ENCODE measurements at regions of chr12 and their contacts with region 1.

Region 1: GRCh38 chr12:42325653-42326474 is at the starts of genes PPHLN1 and ZCRB1:
- DNase-seq: peak; percentile 89
- ATAC-seq: peak; percentile 92
- H3K4me3 Mint-ChIP-seq: peak within 1 kb of the TSS; percentile 98
- H3K27ac Mint-ChIP-seq: peak within 1 kb of the TSS; percentile 97
- H3K4me1 Mint-ChIP-seq: peaks cover 45% of the 10 kb centered on the region
- H3K27me3 Mint-ChIP-seq: no peaks in the 10 kb centered on the region
- total RNA-seq, gene PPHLN1: 86.2 to 90.0 TPM
- total RNA-seq, gene ZCRB1: 79.9 to 103 TPM

Region 2: GRCh38 chr12:42097971-42098370 is 227.9 kb before region 1 on chr12:
- CTCF ChIA-PET with region 1: no interaction called
- POLR2A ChIA-PET with region 1: no interaction called
- intact Hi-C with region 1: loop called in 1 of 2 experiments (anchors 1 kb)
- DNase-seq: peak; percentile 9
- ATAC-seq: peak; percentile 83
- H3K4me3 Mint-ChIP-seq: peak overlapping the region; percentile 72
- H3K27ac Mint-ChIP-seq: peak overlapping the region; percentile 93
- H3K4me1 Mint-ChIP-seq: peaks cover 43% of the 10 kb centered on the region
- H3K27me3 Mint-ChIP-seq: no peaks in the 10 kb centered on the region

Region 3: GRCh38 chr12:42144408-42145196 is 181.3 kb before region 1 on chr12 and contains the start of gene GXYLT1:
- CTCF ChIA-PET with region 1: no interaction called
- POLR2A ChIA-PET with region 1: interaction called, 3 read pairs
- intact Hi-C with region 1: loop called (anchors 1 to 5 kb)
- DNase-seq: peak; percentile 85
- ATAC-seq: peak; percentile 91
- H3K4me3 Mint-ChIP-seq: peak within 1 kb of the TSS; percentile 92
- H3K27ac Mint-ChIP-seq: peak within 1 kb of the TSS; percentile 65
- H3K4me1 Mint-ChIP-seq: peaks cover 34% of the 10 kb centered on the region
- H3K27me3 Mint-ChIP-seq: peaks cover 2% of the 10 kb centered on the region
- total RNA-seq, gene GXYLT1: 6.1 to 6.7 TPM

Region 4: DNA sequence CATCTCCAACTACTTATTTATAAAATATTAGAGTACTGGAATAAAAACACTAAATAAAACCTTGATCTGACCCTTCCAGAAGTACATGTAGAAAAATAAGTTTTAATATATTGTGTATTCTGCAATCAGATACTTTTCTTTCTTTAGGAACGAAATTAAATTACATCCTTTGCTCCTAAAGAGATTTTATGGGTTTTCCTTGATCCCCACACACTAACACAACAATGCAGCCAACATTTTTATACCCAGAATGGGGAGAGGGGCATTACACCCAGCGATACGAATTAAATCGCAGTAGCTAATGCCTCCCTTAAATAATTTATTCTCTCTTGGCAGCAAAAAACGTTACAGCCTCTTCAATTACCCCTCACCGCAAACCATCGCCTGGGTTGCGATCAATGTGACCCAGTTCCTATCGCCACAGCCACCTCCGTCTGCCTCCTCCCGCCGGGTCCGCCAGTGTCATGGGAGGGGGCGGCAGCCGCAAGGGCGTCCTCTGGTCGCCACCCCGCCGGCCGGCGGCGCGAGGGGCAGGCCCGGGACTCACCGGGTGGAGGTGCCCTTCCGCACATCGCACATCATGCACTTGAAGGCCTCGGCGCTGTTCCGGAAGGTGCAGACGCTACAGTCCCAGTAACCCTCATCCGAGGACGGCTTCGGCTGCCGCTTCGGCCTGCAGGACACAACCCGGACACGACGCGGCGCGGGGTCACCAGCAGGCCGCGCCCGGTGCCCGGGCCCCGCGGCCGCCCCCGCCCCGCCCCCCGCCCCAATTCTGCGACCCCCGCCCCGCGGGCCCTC is 88.6 kb before region 1 on chr12:
- CTCF ChIA-PET with region 1: no interaction called
- POLR2A ChIA-PET with region 1: no interaction called
- intact Hi-C with region 1: loop called (anchors 1 to 2 kb)
- DNase-seq: peak; percentile 85
- ATAC-seq: peak; percentile 85
- H3K4me3 Mint-ChIP-seq: peak overlapping the region; percentile 86
- H3K27ac Mint-ChIP-seq: peak overlapping the region; percentile 90
- H3K4me1 Mint-ChIP-seq: peaks cover 40% of the 10 kb centered on the region
- H3K27me3 Mint-ChIP-seq: no peaks in the 10 kb centered on the region

Region 5: GRCh38 chr12:42299392-42300308 is 26.2 kb before region 1 on chr12:
- CTCF ChIA-PET with region 1: no interaction called
- POLR2A ChIA-PET with region 1: no interaction called
- intact Hi-C with region 1: loop called in 1 of 2 experiments (anchors 1 kb)
- DNase-seq: peak; percentile 88
- ATAC-seq: peak; percentile 95
- H3K4me3 Mint-ChIP-seq: peak overlapping the region; percentile 1
- H3K27ac Mint-ChIP-seq: peak overlapping the region; percentile 77
- H3K4me1 Mint-ChIP-seq: peaks cover 17% of the 10 kb centered on the region
- H3K27me3 Mint-ChIP-seq: no peaks in the 10 kb centered on the region

Region 6: DNA sequence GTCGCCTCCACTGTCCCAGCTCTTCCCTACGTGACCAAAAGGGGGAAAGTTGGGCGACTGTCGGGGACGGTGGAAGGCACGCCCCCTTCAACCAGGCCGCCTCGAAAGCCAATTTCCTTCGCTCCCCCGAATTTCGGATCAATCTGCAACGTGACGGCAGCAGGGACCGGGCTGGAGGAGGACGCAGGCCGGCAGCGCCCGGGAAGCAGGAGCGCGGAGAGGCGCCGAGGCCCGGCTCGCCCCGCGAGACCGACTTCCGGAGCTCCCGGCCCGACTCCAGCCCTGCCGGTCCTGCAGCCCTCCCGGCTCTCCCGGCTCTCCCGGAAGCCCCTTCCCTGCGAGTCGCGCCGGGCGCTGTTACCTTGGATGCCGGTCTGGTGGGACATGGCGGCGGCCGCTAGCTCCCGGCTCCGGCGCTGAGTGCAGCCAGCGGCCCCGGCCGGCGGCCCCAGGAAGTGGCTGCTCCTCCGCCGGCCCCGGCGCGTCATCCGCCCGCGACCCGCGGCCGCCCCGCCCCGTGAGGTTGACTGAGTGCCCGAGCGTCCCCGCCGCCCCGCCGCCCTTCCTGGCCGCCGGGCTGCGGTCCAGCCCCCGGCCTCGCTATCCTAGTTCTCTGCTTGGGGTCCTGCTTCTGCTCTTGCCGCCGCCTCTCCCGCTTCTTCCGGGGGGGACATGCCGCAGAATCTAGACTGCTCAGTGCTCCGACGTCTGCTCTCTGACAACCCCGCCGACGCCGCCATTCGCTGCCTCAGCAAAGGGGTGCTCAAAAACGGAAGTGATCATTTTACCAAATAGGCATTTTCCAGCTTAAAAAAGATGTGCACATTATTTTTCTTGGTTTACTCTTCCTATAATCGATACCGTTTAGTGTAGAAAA is 1480.2 kb after region 1 on chr12 and contains the start of gene TWF1:
- CTCF ChIA-PET with region 1: no interaction called
- POLR2A ChIA-PET with region 1: no interaction called
- intact Hi-C with region 1: loop called in 1 of 2 experiments (anchors 5 kb)
- DNase-seq: peak; percentile 93
- ATAC-seq: peak; percentile 94
- H3K4me3 Mint-ChIP-seq: peak within 1 kb of the TSS; percentile 88
- H3K27ac Mint-ChIP-seq: peak within 1 kb of the TSS; percentile 100
- H3K4me1 Mint-ChIP-seq: peaks cover 28% of the 10 kb centered on the region
- H3K27me3 Mint-ChIP-seq: no peaks in the 10 kb centered on the region
- total RNA-seq, gene TWF1: 15.5 to 17.4 TPM

Measured in activated CD4-positive, alpha-beta T cell treated with anti-CD3 and anti-CD28 coated beads for 36 hours (primary cell).